Panc1 (cell line): ENCODE measurements at regions of chr18 and their contacts with region 1.

Region 1: GRCh38 chr18:14908541-14908940 is 160.6 kb downstream of the ANKRD30B start:
- DNase-seq: no peak
- ATAC-seq: no peak
- H3K4me3 ChIP-seq: no peak overlapping the region
- H3K27ac ChIP-seq: no peak overlapping the region
- H3K4me1 ChIP-seq: no peaks in the 10 kb centered on the region
- H3K27me3 ChIP-seq: no peaks in the 10 kb centered on the region
- CTCF ChIP-seq: no peak

Region 2: DNA sequence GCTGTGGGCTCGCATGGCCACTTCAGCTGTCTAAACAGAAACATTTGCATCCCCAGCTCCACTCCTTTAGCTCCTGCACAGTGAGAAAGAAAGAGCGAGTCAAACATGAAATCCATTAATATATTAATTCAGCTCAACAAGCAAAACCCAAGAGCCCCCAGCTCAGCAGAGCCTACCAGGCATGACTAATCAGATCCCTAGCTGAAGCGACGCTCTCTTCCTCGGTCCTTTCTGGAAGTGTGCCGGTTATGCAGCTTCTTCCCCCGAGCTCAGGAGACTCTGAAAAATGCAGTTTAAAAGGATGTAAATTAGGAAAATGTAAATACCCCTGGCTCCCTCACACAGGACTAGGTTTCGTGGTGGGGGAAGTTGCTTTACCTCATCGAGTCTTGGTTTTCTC is 61.0 kb after region 1 on chr18:
- CTCF ChIA-PET with region 1: no interaction called
- POLR2A ChIA-PET with region 1: no interaction called
- in situ Hi-C with region 1: no loop called
- intact Hi-C with region 1: loop called (anchors 10 kb)
- DNase-seq: no peak
- ATAC-seq: no peak
- H3K4me3 ChIP-seq: no peak overlapping the region
- H3K27ac ChIP-seq: no peak overlapping the region
- H3K4me1 ChIP-seq: no peaks in the 10 kb centered on the region
- H3K27me3 ChIP-seq: no peaks in the 10 kb centered on the region
- CTCF ChIP-seq: no peak

Region 3: GRCh38 chr18:14979875-14980274 is 71.3 kb after region 1 on chr18:
- CTCF ChIA-PET with region 1: no interaction called
- POLR2A ChIA-PET with region 1: no interaction called
- in situ Hi-C with region 1: no loop called
- intact Hi-C with region 1: no loop called
- DNase-seq: no peak
- ATAC-seq: no peak
- H3K4me3 ChIP-seq: no peak overlapping the region
- H3K27ac ChIP-seq: no peak overlapping the region
- H3K4me1 ChIP-seq: no peaks in the 10 kb centered on the region
- H3K27me3 ChIP-seq: no peaks in the 10 kb centered on the region
- CTCF ChIP-seq: no peak